Testis (tissue), 5 donors: ENCODE measurements at regions of chr5 and their contacts with region 1.

Region 1: GRCh38 chr5:36397901-36398536 is 96.3 kb upstream of the RANBP3L start:
- DNase-seq: no peak
- H3K4me3 ChIP-seq: no peak overlapping the region
- H3K27ac ChIP-seq: no peak overlapping the region
- H3K4me1 ChIP-seq: no peaks in the 10 kb centered on the region
- H3K27me3 ChIP-seq: no peaks in the 10 kb centered on the region
- CTCF ChIP-seq: peak; percentile 11 to 32 (median 18)
- POLR2A ChIP-seq: no peak

Region 2: DNA sequence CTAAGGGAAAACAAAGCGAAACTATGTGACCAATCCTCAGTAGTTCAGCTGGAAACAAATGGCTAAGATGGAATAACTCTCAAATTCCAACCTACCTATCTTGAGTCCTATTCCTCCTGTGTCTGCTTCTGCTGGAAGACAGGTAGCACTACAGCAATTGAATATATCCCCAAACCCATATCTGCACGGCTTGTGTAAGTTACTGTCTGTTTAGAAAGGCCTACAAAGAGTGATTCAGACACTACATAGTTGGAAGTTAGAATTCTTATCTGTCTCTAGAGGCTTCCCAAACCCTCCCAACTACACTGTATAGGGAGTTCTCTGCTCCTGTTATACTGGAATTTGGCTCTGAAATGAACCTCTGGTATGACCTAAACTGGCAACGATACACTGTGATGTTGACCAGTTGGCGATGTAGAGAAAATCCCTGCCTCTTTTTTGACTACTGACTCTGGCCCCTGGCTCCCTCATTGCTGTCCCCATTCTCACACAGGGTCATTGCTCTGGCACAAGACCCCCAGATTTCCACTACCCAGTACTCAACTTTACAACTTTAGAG is 133.7 kb before region 1 on chr5:
- intact Hi-C with region 1: loop called (anchors 10 kb)
- DNase-seq: no peak
- H3K4me3 ChIP-seq: no peak overlapping the region
- H3K27ac ChIP-seq: no peak overlapping the region
- H3K4me1 ChIP-seq: no peaks in the 10 kb centered on the region
- H3K27me3 ChIP-seq: no peaks in the 10 kb centered on the region
- CTCF ChIP-seq: no peak
- POLR2A ChIP-seq: no peak